Brain microvascular endothelial cell (primary cell): ENCODE measurements at regions of chr6 and their contacts with region 1.

Region 1: GRCh38 chr6:134822920-134823709 is 126.8 kb downstream of the ALDH8A1 start:
- DNase-seq: peak; percentile 85
- H3K4me3 ChIP-seq: no peak overlapping the region
- H3K27ac ChIP-seq: peak overlapping the region; percentile 48
- H3K27me3 ChIP-seq: no peaks in the 10 kb centered on the region
- CTCF ChIP-seq: peak; percentile 87

Region 2: GRCh38 chr6:134169871-134170486 is 653.1 kb before region 1 on chr6:
- in situ Hi-C with region 1: loop called (anchors 10 kb)
- DNase-seq: no peak
- H3K4me3 ChIP-seq: peak overlapping the region; percentile 78
- H3K27ac ChIP-seq: peak overlapping the region; percentile 11
- H3K27me3 ChIP-seq: no peaks in the 10 kb centered on the region
- CTCF ChIP-seq: no peak